ENCODE measurements at regions of chr11 and their contacts with region 1.

Region 1: DNA sequence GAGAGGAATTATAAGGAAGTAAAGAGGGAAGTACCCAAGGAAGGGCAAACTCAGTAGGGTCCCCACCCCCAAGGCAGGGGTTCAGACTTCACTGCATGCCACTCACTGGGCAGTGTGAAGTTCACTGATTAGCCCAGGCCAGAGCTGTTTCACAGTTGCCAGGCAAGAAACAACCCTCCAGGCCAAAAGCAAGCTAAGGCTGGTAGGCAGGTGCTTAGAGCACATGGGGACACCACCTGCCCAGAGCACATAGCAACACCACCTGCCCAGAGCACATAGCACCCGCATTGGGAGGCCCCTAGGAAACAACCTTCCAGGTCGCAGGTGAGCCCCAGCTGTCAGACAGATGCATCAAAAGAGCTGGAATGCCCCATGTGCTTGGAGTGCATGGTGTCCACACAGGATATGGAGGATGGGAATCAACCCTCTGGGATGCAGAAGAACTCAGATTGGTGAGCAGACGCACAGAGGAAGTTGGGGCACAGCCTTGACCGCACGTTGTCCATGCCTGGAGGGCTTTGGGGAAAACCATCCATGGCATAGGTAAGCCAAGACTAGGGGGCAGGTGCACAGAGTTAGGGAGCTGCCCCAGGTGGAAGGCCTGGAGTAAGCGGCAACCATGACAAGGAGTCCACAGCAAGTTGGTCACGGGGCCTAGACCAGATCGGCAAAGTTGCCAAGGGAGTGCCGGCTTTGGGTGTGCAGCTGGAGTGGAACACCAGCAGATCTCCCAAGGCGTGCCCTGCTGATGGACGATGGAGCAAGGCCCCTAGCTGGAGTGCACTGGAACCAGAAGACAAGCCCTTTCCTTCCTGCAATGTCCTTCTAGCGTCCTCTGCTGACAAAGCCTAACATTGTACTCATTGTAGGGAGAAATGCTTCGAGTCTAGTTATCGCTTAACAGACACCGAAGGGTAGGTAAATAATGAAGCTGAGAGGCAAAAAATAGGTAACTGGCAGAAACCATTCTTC is 7.8 kb upstream of the TMEM216 start:
- DNase-seq: no peak
- H3K4me3 Mint-ChIP-seq: no peak overlapping the region
- H3K27ac Mint-ChIP-seq: no peak overlapping the region
- H3K4me1 Mint-ChIP-seq: peaks cover 4% of the 10 kb centered on the region
- H3K27me3 Mint-ChIP-seq: no peaks in the 10 kb centered on the region

Region 2: DNA sequence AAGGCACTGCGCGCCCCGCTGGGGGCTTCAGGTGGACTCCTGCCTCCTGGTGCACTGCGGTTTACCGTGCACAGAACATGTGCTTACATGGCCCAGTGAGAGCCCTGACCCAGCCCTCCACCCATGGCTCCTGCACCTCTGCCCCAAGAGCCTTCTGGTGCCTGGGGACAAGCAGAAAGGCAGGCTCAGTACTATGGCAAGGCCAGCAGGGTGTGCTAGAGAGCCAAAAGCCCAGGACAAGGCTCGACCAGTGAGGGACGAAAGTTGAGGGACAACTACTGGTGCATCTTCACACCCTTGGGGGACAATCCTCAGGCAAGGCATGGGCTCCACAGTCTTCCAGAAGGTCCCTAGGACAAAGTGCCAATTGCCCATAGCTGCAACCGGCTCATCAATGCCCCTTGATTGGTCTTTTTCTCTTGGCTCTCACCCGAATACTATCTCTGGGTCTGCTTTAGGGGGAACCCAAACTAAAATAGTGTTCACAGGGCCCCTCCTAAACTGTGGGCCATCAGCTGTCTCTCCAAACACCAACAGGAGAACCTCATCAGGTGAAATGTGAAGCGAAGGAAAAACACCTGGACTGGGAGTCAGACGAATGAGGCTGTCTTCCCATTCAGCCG is 130.0 kb before region 1 on chr11:
- CTCF ChIA-PET with region 1: interaction called, 60 read pairs
- POLR2A ChIA-PET with region 1: no interaction called
- intact Hi-C with region 1: no loop called
- DNase-seq: peak; percentile 80
- H3K4me3 Mint-ChIP-seq: no peak overlapping the region
- H3K27ac Mint-ChIP-seq: no peak overlapping the region
- H3K4me1 Mint-ChIP-seq: no peaks in the 10 kb centered on the region
- H3K27me3 Mint-ChIP-seq: no peaks in the 10 kb centered on the region

Region 3: DNA sequence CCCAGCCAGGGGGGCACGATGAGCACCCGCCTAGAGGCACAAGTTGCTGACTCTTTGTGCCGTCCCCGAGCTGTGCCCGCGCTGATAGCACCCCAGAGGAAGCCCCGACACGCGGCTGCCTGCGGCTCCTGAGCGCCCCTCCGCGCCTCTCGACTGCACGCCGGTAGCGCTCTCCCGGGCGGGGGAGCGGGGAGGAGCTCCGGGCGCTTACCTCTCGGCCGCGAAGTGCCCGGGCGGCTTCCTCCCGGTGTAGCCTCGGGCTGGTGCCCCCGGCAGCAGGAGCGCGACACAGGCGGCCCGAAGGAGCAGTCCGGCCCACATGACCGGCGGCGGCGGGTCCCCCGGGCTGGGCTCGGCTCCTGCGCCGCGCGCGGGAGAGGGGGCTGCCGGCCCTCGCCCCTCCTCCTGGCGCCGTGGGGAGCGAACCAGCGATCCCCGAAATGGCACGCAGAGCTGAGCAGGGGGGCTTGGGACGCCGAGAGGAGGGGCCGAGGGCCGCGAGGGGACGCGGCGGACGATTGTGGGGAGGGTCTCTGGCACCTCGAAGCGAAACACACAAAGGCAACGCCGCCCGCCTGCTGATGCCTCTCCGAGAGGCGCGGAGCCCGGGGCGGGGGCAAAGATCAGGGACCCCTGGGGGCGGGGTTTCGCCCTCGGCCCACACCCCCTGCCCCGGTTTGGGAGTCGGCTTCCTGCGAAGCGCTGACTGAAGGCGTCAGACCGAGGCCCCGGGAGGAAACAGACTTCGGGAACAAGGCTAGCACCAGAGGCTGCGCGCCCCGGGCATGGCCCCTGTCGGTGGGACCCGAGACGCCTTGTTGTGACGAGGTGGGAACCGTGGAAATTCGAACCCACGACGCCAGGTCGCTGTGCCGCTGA is 89.6 kb before region 1 on chr11 and contains the start of gene VWCE:
- CTCF ChIA-PET with region 1: interaction called, 10 read pairs
- POLR2A ChIA-PET with region 1: no interaction called
- intact Hi-C with region 1: no loop called
- DNase-seq: peak; percentile 81
- H3K4me3 Mint-ChIP-seq: peak within 1 kb of the TSS; percentile 72
- H3K27ac Mint-ChIP-seq: no peak within 1 kb of the TSS
- H3K4me1 Mint-ChIP-seq: peaks cover 32% of the 10 kb centered on the region
- H3K27me3 Mint-ChIP-seq: peaks cover 19% of the 10 kb centered on the region
- total RNA-seq, gene VWCE: 1.1 to 1.4 TPM

Region 4: GRCh38 chr11:61315260-61315659 is 69.3 kb before region 1 on chr11:
- CTCF ChIA-PET with region 1: interaction called, 12 read pairs
- POLR2A ChIA-PET with region 1: no interaction called
- intact Hi-C with region 1: no loop called
- DNase-seq: no peak
- H3K4me3 Mint-ChIP-seq: no peak overlapping the region
- H3K27ac Mint-ChIP-seq: no peak overlapping the region
- H3K4me1 Mint-ChIP-seq: no peaks in the 10 kb centered on the region
- H3K27me3 Mint-ChIP-seq: no peaks in the 10 kb centered on the region

Region 5: GRCh38 chr11:61325649-61326414 is 58.7 kb before region 1 on chr11:
- CTCF ChIA-PET with region 1: interaction called, 15 read pairs
- POLR2A ChIA-PET with region 1: no interaction called
- intact Hi-C with region 1: no loop called
- DNase-seq: no peak
- H3K4me3 Mint-ChIP-seq: no peak overlapping the region
- H3K27ac Mint-ChIP-seq: no peak overlapping the region
- H3K4me1 Mint-ChIP-seq: peaks cover 22% of the 10 kb centered on the region
- H3K27me3 Mint-ChIP-seq: no peaks in the 10 kb centered on the region

Region 6: DNA sequence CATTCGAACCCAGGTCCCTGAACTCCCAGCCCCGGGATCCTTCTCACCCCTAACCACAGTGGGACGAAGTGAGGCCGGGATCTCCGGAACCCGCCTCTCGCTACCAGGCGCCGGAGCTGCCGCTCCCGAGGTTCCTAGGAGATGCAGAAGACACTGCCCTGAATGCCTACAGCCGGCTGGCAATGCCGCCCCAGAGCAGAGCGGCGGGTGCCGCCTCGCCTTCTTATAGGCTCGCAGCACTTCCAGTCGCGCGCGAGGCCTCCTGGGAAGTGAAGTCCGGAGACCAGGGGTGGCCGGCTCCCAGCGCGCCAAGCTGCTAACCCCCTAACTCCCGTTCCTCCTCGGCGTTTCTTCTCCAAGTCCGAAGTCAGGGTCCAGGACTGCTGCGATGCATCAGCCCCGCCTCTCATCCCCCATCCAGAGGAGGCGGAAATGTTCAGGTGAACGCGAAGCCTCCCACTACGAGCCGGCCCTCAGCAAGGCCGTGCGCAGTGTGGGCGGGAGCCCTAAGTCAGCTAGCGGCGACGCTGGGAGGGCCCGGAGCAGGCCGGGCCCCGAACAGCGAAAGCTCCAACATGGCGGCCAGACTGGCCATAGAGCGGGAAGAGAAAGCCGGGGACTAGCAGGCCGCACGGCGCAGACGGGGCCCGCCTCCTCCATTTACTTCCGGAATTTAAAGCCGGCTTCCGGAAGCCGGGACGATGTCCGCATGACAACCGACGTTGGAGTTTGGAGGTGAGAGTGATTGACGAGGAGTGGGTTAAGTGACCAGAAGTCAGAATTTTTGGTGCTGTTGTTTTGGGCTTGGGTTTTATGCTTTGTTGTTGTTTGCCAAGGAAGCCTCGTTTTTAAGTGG is 22.6 kb before region 1 on chr11 and contains the starts of genes CYB561A3 and TMEM138:
- CTCF ChIA-PET with region 1: interaction called, 71 read pairs
- POLR2A ChIA-PET with region 1: interaction called, 8 read pairs
- intact Hi-C with region 1: no loop called
- DNase-seq: peak; percentile 95
- H3K4me3 Mint-ChIP-seq: peak within 1 kb of the TSS; percentile 100
- H3K27ac Mint-ChIP-seq: peak within 1 kb of the TSS; percentile 96
- H3K4me1 Mint-ChIP-seq: peaks cover 32% of the 10 kb centered on the region
- H3K27me3 Mint-ChIP-seq: no peaks in the 10 kb centered on the region
- total RNA-seq, gene CYB561A3: 32.3 to 32.9 TPM
- total RNA-seq, gene TMEM138: 33.7 to 34.6 TPM

Region 7: DNA sequence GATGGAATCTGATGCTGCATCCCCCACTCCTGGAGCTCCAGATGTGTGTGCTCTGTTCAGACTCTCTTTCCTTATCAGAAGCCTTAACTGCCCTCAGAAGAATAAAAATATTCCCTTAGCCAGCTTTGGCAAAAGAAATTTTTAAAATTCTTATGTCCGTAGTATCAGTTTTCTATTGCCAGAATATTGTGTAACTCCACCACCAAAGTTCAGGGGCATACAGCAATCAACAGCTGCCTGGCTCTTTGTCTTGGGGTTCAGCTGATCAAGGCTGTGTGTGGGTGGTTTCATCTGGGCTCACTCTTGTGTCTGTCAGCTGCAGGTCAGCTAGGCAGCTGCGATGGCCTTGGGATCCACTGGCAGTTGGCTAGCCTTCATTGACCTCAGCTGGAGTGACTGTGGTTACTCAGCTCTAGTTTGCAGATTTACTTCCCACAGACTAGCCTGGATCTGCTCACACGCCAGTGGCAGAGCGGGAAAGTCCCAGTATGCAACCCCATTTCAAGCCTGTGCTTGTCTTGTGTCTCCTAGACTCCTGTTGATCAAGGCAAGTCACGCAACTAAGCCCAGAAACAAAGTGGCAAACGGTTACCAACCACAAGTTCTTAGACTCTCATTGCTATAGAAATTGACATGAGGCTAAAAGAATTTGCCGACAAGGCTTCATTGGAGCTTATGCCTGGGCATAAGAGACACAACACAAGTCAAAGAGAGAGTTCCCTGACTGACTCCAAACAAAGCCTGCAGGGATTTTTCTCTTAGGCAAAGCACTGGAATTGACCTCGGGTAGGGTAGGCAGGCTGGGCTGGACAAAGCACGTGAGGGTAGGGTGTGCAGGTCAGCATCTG is 15.0 kb before region 1 on chr11:
- CTCF ChIA-PET with region 1: interaction called, 71 read pairs
- POLR2A ChIA-PET with region 1: interaction called, 6 read pairs
- intact Hi-C with region 1: no loop called
- DNase-seq: no peak
- H3K4me3 Mint-ChIP-seq: no peak overlapping the region
- H3K27ac Mint-ChIP-seq: peak overlapping the region; percentile 60
- H3K4me1 Mint-ChIP-seq: peaks cover 8% of the 10 kb centered on the region
- H3K27me3 Mint-ChIP-seq: no peaks in the 10 kb centered on the region